Tibial artery (tissue), 4 donors: ENCODE measurements at regions of chr19 and their contacts with region 1.

Region 1: DNA sequence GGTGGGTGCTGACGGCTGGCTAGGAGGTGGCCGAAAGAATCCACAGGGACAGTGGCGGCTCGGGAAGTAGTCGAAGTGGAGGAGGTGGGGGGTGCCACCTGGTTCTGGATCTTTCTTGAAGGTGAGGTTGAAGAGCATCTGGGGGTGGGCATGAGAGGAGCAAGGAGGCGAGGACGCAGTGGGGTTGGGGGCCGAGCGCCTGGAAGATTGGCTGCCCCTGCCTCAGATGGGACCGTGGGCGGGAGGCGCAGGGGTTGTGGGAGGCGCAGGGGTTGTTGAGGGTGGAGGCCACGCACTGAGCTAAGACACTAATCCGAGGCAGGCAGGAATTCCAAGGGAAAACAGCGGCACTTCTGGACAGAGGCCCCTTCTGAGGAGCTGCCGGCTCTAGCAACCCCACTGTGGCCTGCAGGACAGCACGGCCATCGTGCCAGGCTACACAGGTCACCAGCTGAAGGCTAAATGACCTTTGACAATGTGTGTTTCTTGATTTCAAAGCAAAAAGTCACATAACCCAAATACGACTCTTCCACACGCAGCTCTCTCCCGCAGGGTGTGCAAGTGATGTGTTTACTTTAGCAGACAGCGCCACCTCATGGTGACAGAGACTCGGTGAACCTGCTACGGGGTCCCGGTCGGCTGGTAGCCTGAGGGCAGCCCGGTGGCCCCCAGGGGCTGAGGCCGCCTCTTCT is 44.1 kb upstream of the RANBP3 start:
- DNase-seq: peak; percentile 70 to 78
- H3K4me3 ChIP-seq: no peak overlapping the region
- H3K27ac ChIP-seq: no peak overlapping the region
- H3K4me1 ChIP-seq: peaks cover 0 to 14% (median 2%) of the 10 kb centered on the region in 4 donors
- H3K27me3 ChIP-seq: no peaks in the 10 kb centered on the region
- CTCF ChIP-seq: peak; percentile 64

Region 2: GRCh38 chr19:5967994-5968430 is 54.0 kb before region 1 on chr19:
- intact Hi-C with region 1: loop called (anchors 2 kb)
- DNase-seq: peak; percentile 74 to 77
- H3K4me3 ChIP-seq: no peak overlapping the region
- H3K27ac ChIP-seq: peak overlapping the region; percentile 30 to 40
- H3K4me1 ChIP-seq: peaks cover 0 to 51% (median 32%) of the 10 kb centered on the region in 4 donors
- H3K27me3 ChIP-seq: no peaks in the 10 kb centered on the region
- CTCF ChIP-seq: peak; percentile 73 to 82

Region 3: DNA sequence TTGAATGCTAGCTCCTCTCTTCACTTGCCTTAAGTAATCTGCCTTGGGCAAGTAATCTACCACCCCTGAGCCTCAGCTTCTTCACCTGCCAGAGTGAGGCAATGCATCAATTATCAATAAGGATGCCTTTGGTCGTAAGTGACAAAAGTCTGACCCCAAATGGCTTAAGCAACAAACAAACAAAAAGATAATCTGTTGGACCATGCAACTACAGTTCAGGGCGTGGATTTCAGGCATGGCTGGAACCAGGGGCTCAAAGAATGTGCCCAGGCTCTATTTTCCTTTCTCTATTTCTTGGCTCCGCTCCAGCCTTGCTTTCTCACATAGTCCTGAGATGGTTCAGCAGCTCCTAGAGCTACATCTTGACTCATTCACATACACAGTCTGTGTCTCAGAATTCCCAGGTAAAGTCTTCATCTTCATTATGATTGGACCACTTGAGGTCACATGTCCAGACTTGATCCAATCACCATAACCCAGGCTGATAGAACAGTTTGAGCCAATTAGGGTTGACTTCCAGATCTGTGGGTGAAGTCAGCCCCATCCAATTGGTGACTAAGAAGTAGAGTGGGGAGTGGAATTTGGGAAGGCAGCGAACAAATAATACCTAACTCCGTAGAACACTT is 143.0 kb after region 1 on chr19:
- intact Hi-C with region 1: no loop called
- DNase-seq: no peak
- H3K4me3 ChIP-seq: no peak overlapping the region
- H3K27ac ChIP-seq: no peak overlapping the region
- H3K4me1 ChIP-seq: no peaks in the 10 kb centered on the region
- H3K27me3 ChIP-seq: no peaks in the 10 kb centered on the region
- CTCF ChIP-seq: no peak